GM10248 (cell line): ENCODE measurements at regions of chr17 and their contacts with region 1.

Region 1: GRCh38 chr17:81683584-81684237 is at the starts of genes ARL16 and HGS:
- DNase-seq: peak; percentile 100
- CTCF ChIP-seq: no peak

Region 2: DNA sequence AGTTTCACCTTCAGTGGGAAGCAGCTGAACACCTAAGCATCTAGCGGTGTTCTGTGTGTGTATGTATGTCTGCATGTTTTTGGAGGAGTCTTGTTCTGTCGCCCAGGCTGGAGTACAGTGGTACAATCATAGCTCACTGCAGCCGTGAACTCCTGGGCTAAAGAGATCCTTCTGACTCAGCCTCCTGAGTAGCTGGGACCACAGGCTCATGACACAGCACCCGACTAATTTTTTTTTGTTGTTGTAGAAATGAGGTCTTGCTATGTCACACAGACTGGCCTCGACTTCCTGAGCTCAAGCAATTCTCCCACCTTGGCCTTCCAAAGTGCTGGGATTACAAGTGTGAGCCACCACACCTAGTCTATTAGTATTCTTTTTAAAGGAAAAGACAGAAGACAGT is 101.4 kb before region 1 on chr17:
- CTCF ChIA-PET with region 1: no interaction called
- POLR2A ChIA-PET with region 1: interaction called, 12 read pairs
- DNase-seq: no peak
- CTCF ChIP-seq: no peak

Region 3: DNA sequence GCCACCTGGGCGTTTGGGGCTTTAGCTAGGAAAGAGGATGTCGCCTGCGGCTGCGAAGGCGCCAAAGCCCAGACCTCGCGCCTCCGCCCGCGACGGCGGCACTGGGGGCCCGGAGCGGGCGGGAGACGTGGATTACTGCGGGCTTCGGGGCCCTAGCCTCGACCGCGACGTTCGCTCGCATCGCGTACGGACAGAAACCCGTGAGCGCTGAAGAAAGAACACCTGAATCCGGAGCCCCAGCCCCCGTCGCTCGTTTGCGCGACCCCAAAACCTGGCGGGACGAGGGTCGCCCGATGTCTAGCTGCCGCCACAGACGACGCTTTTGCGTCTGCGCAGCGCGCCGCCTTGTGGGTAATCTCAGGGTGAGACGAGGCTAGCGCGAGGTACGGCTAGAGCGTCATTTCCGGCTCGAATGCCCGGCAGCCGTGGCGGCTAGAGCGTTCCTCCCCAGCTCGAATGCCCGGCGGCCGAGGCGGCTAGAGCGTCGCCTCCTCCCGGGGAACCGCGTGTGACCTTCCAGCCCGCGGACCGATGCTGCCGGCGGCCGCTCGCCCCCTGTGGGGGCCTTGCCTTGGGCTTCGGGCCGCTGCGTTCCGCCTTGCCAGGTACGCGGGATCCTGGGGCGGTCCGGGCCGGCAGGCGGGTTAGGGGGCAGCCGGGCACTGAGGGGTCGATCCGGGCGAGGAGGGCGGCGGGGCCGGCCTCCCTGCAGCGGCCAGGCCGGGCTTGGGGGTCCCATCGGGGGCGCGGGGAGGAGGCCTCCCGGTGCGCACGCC is 19.4 kb after region 1 on chr17 and contains the start of gene MRPL12:
- CTCF ChIA-PET with region 1: interaction called, 12 read pairs
- POLR2A ChIA-PET with region 1: interaction called, 3 read pairs
- DNase-seq: peak; percentile 98
- CTCF ChIP-seq: no peak